Activated CD4-positive, alpha-beta memory T cell treated with anti-CD3 and anti-CD28 coated beads for 36 hours (primary cell): ENCODE measurements at regions of chr7 and their contacts with region 1.

Region 1: DNA sequence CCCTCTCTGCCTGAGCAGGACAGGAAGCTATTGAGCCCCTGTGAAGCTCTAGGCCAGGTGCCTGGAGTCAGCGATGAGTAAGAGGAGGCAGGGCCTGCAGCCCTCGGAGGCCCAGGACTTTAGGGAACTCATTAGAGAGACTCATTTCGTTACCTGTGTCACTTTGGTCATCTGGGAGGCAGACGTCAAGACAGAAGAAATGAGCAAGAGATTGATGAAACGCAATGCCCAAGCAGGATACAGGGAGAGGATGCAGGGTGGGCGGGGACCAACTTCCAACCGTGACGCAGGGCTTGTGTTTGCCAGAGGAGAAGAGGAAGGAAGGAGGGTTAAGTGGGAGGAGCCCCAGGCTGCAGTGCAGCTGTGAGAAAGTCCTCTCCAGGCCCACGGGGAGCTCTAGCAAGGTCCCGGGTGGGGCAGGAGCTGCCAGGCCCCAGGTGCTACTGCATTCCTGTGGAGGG is 26.4 kb upstream of the GNA12 start:
- DNase-seq: peak; percentile 87
- H3K4me3 Mint-ChIP-seq: peak overlapping the region; percentile 30
- H3K27ac Mint-ChIP-seq: peak overlapping the region; percentile 55
- H3K4me1 Mint-ChIP-seq: peaks cover 39% of the 10 kb centered on the region
- H3K27me3 Mint-ChIP-seq: no peaks in the 10 kb centered on the region

Region 2: DNA sequence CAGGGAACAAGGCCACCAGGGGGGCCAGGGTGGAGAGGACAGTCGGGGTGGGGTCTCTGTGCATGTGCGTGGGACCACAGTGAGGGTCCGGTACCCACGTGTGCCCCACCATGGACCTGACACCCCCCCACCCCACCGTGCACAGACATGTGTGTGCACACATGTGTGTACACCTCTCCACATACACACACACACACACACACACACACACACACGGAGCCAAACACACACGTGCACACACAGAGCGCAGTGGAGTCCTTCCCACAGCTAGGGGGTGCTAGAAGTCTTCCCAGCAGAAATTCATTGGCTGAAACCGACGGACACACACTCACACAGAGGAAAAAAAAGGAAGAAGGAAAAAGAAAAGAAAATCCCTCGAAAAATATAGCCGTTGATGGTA is 16.4 kb after region 1 on chr7:
- CTCF ChIA-PET with region 1: interaction called, 3 read pairs
- POLR2A ChIA-PET with region 1: interaction called, 3 read pairs
- intact Hi-C with region 1: loop called (anchors 2 kb)
- DNase-seq: peak; percentile 70
- H3K4me3 Mint-ChIP-seq: no peak overlapping the region
- H3K27ac Mint-ChIP-seq: no peak overlapping the region
- H3K4me1 Mint-ChIP-seq: peaks cover 3% of the 10 kb centered on the region
- H3K27me3 Mint-ChIP-seq: no peaks in the 10 kb centered on the region